ENCODE measurements at regions of chr11 and their contacts with region 1.

Region 1: DNA sequence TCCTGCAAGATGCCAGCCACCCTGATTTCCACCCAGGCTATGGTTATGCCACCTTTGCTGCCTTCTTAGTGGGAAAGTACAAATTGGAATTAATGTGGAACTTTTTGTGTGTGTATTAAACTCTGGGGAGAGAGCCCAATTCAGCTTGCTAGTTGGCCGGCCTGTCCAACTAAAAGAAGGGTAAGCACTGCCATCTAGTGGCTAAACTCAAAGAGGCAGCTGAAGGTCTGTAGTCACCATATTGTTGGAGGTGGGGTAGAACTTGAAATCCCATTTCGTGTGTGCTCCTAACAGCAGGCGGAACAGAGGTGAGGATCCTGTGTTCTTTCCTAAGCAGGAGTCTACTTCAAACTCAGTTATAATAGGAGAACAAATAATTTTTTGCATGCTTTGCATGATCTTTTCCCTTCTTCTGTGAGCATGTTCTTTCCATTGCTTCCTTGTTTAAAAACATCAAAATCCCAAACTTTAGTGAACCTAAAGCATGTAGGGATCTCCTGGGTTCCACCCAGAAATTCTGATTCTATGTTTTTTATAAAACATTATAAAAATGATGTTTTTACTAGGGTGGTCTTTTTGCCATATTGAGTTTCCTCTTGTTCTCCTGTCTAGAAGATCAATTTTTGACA is 138.8 kb upstream of the SORL1-AS1 start:
- DNase-seq: peak; percentile 40 to 85 (median 69)
- ATAC-seq: peak; percentile 92
- H3K4me3 ChIP-seq: no peak overlapping the region
- H3K4me3 Mint-ChIP-seq: no peak overlapping the region
- H3K27ac ChIP-seq: peak overlapping the region in 1 of 2 experiments; percentile 37
- H3K27ac Mint-ChIP-seq: no peak overlapping the region
- H3K4me1 ChIP-seq: no peaks in the 10 kb centered on the region
- H3K4me1 Mint-ChIP-seq: peaks cover 5% of the 10 kb centered on the region
- H3K27me3 ChIP-seq: no peaks in the 10 kb centered on the region
- H3K27me3 Mint-ChIP-seq: no peaks in the 10 kb centered on the region
- CTCF ChIP-seq: peak; percentile 82

Region 2: DNA sequence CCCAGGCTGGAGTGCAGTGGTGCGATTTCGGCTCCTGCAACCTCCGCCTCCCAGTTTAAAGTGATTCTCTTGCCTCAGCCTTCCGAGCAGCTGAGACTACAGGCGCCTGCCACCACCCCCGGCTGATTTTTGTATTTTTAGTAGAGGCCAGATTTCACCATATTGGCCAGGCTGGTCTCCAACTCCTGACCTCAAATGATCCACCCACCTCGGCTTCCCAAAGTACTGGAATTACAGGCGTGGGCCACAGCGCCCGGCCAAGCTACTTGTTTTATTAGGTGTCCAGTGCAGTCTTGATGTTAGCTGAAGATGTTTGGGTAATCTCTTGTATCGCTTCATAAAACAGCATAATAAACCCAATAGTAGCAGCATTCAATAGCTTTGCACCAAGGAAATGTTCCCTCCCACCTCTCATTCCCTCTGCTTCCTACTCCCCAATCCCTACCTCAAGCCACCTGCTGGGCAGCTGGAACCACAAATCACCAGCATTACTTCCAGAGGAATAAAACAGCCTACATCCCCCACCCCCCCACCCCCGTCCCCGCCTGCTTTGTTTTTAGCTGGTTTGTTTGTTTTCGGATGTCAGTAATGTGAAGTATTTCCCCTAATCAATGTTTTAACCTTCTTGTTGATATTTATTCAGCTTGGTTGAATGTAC is 1091.0 kb before region 1 on chr11:
- CTCF ChIA-PET with region 1: no interaction called
- POLR2A ChIA-PET with region 1: no interaction called
- intact Hi-C with region 1: loop called in 1 of 2 experiments (anchors 10 kb)
- DNase-seq: no peak
- ATAC-seq: no peak
- H3K4me3 ChIP-seq: no peak overlapping the region
- H3K4me3 Mint-ChIP-seq: no peak overlapping the region
- H3K27ac ChIP-seq: no peak overlapping the region
- H3K27ac Mint-ChIP-seq: no peak overlapping the region
- H3K4me1 ChIP-seq: no peaks in the 10 kb centered on the region
- H3K4me1 Mint-ChIP-seq: no peaks in the 10 kb centered on the region
- H3K27me3 ChIP-seq: peaks cover 0 to 2% of the 10 kb centered on the region in 2 experiments
- H3K27me3 Mint-ChIP-seq: peaks cover 48% of the 10 kb centered on the region
- CTCF ChIP-seq: no peak

Region 3: GRCh38 chr11:121194731-121195596 is 396.6 kb before region 1 on chr11:
- CTCF ChIA-PET with region 1: no interaction called
- POLR2A ChIA-PET with region 1: no interaction called
- intact Hi-C with region 1: loop called in 1 of 2 experiments (anchors 1 kb)
- DNase-seq: peak in 8 of 9 experiments; percentile 30 to 76 (median 60)
- ATAC-seq: no peak
- H3K4me3 ChIP-seq: no peak overlapping the region
- H3K4me3 Mint-ChIP-seq: no peak overlapping the region
- H3K27ac ChIP-seq: no peak overlapping the region
- H3K27ac Mint-ChIP-seq: no peak overlapping the region
- H3K4me1 ChIP-seq: no peaks in the 10 kb centered on the region
- H3K4me1 Mint-ChIP-seq: peaks cover 6% of the 10 kb centered on the region
- H3K27me3 ChIP-seq: no peaks in the 10 kb centered on the region
- H3K27me3 Mint-ChIP-seq: peaks cover 33% of the 10 kb centered on the region
- CTCF ChIP-seq: peak; percentile 90

Region 4: GRCh38 chr11:121318848-121319834 is 272.4 kb before region 1 on chr11:
- CTCF ChIA-PET with region 1: interaction called, 22 read pairs
- POLR2A ChIA-PET with region 1: interaction called, 4 read pairs
- intact Hi-C with region 1: loop called (anchors 1 kb)
- DNase-seq: peak in 4 of 9 experiments; percentile 23 to 70 (median 44)
- ATAC-seq: peak; percentile 81
- H3K4me3 ChIP-seq: no peak overlapping the region
- H3K4me3 Mint-ChIP-seq: no peak overlapping the region
- H3K27ac ChIP-seq: no peak overlapping the region
- H3K27ac Mint-ChIP-seq: no peak overlapping the region
- H3K4me1 ChIP-seq: peaks cover 10% of the 10 kb centered on the region
- H3K4me1 Mint-ChIP-seq: peaks cover 19% of the 10 kb centered on the region
- H3K27me3 ChIP-seq: no peaks in the 10 kb centered on the region
- H3K27me3 Mint-ChIP-seq: peaks cover 2% of the 10 kb centered on the region
- CTCF ChIP-seq: peak; percentile 72

Region 5: DNA sequence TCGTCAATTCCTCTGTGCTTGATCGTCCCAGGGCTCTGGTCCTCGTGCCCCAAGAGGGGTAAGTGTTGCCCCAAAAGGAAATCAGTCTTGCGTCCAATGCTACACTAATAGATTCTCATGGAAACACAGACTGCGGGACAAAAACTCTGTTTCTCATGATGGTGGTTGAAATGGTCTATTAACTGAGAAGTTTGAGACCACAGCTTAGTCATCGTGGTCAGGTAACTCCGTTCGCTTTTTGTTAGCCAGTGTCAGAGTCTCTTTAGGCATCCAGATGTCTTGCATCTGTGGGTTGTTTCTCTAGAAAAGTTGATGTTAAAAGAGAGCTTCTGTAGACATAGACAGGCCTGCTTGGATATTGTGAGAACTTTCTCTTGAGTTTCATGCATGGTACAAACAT is 34.2 kb before region 1 on chr11:
- CTCF ChIA-PET with region 1: interaction called, 10 read pairs
- POLR2A ChIA-PET with region 1: no interaction called
- intact Hi-C with region 1: no loop called
- DNase-seq: peak in 1 of 9 experiments; percentile 13
- ATAC-seq: no peak
- H3K4me3 ChIP-seq: no peak overlapping the region
- H3K4me3 Mint-ChIP-seq: no peak overlapping the region
- H3K27ac ChIP-seq: peak overlapping the region in 1 of 2 experiments; percentile 23
- H3K27ac Mint-ChIP-seq: peak overlapping the region; percentile 15
- H3K4me1 ChIP-seq: no peaks in the 10 kb centered on the region
- H3K4me1 Mint-ChIP-seq: peaks cover 21% of the 10 kb centered on the region
- H3K27me3 ChIP-seq: no peaks in the 10 kb centered on the region
- H3K27me3 Mint-ChIP-seq: no peaks in the 10 kb centered on the region
- CTCF ChIP-seq: no peak